ENCODE measurements at regions of chr7 and their contacts with region 1.

Region 1: GRCh38 chr7:17940302-17940883 is at the start of gene SNX13:
- DNase-seq: peak; percentile 95
- H3K4me3 ChIP-seq: peak within 1 kb of the TSS; percentile 36 to 58 (median 58)
- H3K27ac ChIP-seq: peak within 1 kb of the TSS; percentile 64
- H3K4me1 ChIP-seq: peaks cover 20% of the 10 kb centered on the region
- H3K27me3 ChIP-seq: no peaks in the 10 kb centered on the region
- CTCF ChIP-seq: peak in 1 of 2 donors; percentile 48
- POLR2A ChIP-seq: peak; percentile 78
- total RNA-seq, gene SNX13: 28.5 and 32.2 TPM in 2 replicates

Region 2: DNA sequence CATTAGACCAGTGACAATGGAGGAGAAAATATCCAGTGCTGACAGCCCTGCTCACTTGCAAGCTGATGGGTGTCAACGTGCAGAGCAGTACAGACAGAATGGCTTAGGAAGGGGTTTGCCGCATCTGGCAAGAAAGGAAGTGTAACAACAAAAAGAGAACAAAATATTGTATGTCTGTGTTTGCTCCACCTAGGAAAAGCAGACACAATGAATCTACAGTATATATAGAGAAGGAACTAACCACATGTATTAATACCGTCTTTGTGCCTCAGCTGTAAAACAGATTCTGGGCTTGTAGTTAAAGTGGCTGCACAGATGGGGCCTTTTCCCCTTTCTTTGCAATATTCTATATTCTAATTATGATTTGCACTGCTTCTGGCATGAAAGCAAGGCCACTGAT is 1972.8 kb before region 1 on chr7:
- CTCF ChIA-PET with region 1: no interaction called
- POLR2A ChIA-PET with region 1: no interaction called
- dilution Hi-C with region 1: no loop called
- intact Hi-C with region 1: no loop called
- DNase-seq: no peak
- H3K4me3 ChIP-seq: no peak overlapping the region
- H3K27ac ChIP-seq: no peak overlapping the region
- H3K4me1 ChIP-seq: peaks cover 9% of the 10 kb centered on the region
- H3K27me3 ChIP-seq: no peaks in the 10 kb centered on the region
- CTCF ChIP-seq: no peak
- POLR2A ChIP-seq: no peak

Region 3: GRCh38 chr7:17781491-17782215 is 158.7 kb before region 1 on chr7:
- CTCF ChIA-PET with region 1: no interaction called
- POLR2A ChIA-PET with region 1: no interaction called
- dilution Hi-C with region 1: no loop called
- intact Hi-C with region 1: loop called (anchors 5 kb)
- DNase-seq: peak; percentile 55
- H3K4me3 ChIP-seq: no peak overlapping the region
- H3K27ac ChIP-seq: no peak overlapping the region
- H3K4me1 ChIP-seq: peaks cover 16% of the 10 kb centered on the region
- H3K27me3 ChIP-seq: no peaks in the 10 kb centered on the region
- CTCF ChIP-seq: no peak
- POLR2A ChIP-seq: no peak

Region 4: DNA sequence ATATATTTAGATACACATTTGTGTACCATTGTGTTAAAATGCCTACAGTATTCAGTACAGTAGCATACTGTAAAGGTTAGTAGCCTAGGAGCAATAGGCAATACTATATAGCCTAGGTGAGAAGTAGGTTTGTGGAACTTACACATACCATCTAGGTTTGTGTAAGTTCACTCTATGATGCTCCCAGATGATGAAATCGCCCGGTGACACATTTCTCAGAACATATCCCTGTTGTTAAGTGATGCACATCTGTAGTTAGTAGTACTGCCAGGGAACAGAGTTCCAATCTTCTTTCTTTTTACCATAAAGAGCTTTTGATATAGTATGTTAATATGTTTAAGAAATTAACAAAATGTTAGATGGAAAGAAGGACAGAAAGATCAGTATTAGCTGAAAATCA is 138.3 kb before region 1 on chr7:
- CTCF ChIA-PET with region 1: no interaction called
- POLR2A ChIA-PET with region 1: no interaction called
- dilution Hi-C with region 1: no loop called
- intact Hi-C with region 1: no loop called
- DNase-seq: no peak
- H3K4me3 ChIP-seq: no peak overlapping the region
- H3K27ac ChIP-seq: no peak overlapping the region
- H3K4me1 ChIP-seq: no peaks in the 10 kb centered on the region
- H3K27me3 ChIP-seq: no peaks in the 10 kb centered on the region
- CTCF ChIP-seq: no peak
- POLR2A ChIP-seq: no peak

Region 5: GRCh38 chr7:17965603-17966002 is 25.2 kb after region 1 on chr7:
- CTCF ChIA-PET with region 1: interaction called, 3 read pairs
- POLR2A ChIA-PET with region 1: no interaction called
- dilution Hi-C with region 1: no loop called
- intact Hi-C with region 1: loop called (anchors 2 kb)
- DNase-seq: peak; percentile 87
- H3K4me3 ChIP-seq: no peak overlapping the region
- H3K27ac ChIP-seq: peak overlapping the region; percentile 40
- H3K4me1 ChIP-seq: peaks cover 7% of the 10 kb centered on the region
- H3K27me3 ChIP-seq: no peaks in the 10 kb centered on the region
- CTCF ChIP-seq: no peak
- POLR2A ChIP-seq: no peak

Region 6: GRCh38 chr7:18019573-18019972 is 79.2 kb after region 1 on chr7:
- CTCF ChIA-PET with region 1: no interaction called
- POLR2A ChIA-PET with region 1: no interaction called
- dilution Hi-C with region 1: no loop called
- intact Hi-C with region 1: loop called (anchors 1 kb)
- DNase-seq: peak; percentile 98
- H3K4me3 ChIP-seq: peak overlapping the region in 1 of 3 experiments; percentile 11
- H3K27ac ChIP-seq: peak overlapping the region; percentile 95
- H3K4me1 ChIP-seq: peaks cover 24% of the 10 kb centered on the region
- H3K27me3 ChIP-seq: no peaks in the 10 kb centered on the region
- CTCF ChIP-seq: no peak
- POLR2A ChIP-seq: peak; percentile 49

Measured in endothelial cell of umbilical vein (primary cell).